Mammary epithelial cell (primary cell): ENCODE measurements at regions of chr11 and their contacts with region 1.

Region 1: GRCh38 chr11:70202898-70203748 is at the start of gene FADD:
- DNase-seq: peak; percentile 93
- H3K4me3 ChIP-seq: peak within 1 kb of the TSS; percentile 90 to 93 (median 91)
- H3K27ac ChIP-seq: peak within 1 kb of the TSS; percentile 91
- H3K4me1 ChIP-seq: peaks cover 22% of the 10 kb centered on the region
- H3K27me3 ChIP-seq: no peaks in the 10 kb centered on the region
- CTCF ChIP-seq: no peak
- total RNA-seq, gene FADD: 31.8 to 45.0 TPM

Region 2: DNA sequence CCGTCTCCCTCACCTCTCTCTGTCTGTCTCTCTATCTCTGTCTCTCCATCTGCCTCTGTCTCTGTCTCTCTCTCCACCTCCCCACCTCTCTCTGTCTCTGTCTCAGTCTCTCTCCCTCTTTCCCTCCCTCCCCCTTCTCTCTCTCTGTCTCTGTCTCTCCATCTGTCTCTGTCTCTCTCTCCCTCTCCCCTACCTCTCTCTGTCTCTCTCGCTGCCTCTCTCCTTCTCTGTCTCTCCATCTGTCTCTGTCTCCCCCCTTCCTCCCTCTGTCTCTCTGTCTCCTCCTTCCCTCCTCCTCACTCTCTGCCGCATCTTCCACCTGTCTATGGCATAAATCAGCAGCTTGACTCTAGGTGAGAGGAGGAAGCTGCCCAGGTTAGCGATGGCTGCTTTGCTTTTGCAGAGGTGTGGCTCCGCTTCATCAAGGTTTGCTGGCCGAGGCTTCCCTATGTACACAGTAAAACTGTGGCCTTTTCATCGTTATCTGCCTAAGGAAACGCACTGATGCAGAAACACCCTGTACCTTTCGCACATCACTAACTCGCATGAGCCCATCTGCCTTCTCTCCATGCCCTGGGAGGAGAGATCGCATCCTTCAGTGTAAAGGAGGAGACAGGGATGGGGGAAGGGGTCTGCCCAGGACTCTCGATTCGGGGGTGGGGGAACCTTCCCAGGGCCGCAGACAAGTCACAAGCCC is 80.5 kb before region 1 on chr11:
- CTCF ChIA-PET with region 1: no interaction called
- dilution Hi-C with region 1: no loop called
- in situ Hi-C with region 1: no loop called
- intact Hi-C with region 1: no loop called
- DNase-seq: no peak
- H3K4me3 ChIP-seq: no peak overlapping the region
- H3K27ac ChIP-seq: no peak overlapping the region
- H3K4me1 ChIP-seq: peaks cover 45% of the 10 kb centered on the region
- H3K27me3 ChIP-seq: no peaks in the 10 kb centered on the region
- CTCF ChIP-seq: no peak

Region 3: GRCh38 chr11:70153133-70153727 is 49.9 kb before region 1 on chr11:
- CTCF ChIA-PET with region 1: no interaction called
- dilution Hi-C with region 1: no loop called
- in situ Hi-C with region 1: no loop called
- intact Hi-C with region 1: no loop called
- DNase-seq: peak; percentile 84
- H3K4me3 ChIP-seq: no peak overlapping the region
- H3K27ac ChIP-seq: no peak overlapping the region
- H3K4me1 ChIP-seq: peaks cover 40% of the 10 kb centered on the region
- H3K27me3 ChIP-seq: no peaks in the 10 kb centered on the region
- CTCF ChIP-seq: no peak

Region 4: DNA sequence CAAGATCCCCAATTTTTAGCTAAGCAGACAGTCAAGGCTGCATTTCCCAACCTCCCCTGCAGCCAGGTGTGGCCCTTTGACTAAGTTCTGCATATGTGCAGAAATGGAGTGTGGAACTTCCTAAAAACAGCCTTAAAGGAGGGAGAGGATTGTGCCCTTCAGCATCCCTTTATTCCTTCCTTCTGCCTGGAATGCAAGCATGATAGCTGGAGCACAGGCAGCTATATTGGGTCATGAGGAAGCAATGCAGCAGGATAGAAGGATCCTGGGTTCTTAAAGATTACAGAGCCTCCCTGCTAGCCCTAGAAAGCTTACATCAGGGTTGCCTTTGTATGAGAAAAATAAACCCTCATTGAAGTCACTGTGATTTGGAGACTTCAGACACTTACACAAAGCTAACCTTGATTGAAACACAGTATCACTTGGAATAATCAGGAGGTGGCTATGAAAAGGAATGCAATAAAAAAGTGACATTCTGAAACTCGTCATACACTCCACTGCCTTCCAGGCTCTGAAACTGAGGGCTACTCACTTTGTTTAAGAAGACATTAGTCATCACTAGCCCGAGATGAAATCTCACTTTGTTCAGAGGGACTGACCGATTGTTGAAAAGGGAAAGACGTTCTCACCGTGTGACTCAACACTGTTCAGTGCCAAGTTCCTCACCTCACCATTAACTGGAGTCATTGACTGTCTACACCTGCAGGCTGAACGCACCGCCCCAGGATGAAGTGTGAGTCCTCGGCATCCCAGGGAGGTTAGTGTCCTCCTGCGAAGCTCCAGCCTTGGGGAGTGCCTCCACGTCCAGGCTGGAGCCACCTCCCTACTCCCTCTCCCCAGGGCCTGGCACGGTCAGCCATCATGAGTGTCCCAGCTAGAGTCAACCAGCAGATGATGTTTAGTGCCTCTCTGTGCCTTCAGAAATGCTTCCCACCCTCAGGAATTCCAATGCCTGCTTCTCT is 30.2 kb after region 1 on chr11:
- CTCF ChIA-PET with region 1: no interaction called
- dilution Hi-C with region 1: no loop called
- in situ Hi-C with region 1: no loop called
- intact Hi-C with region 1: loop called (anchors 1 kb)
- DNase-seq: peak; percentile 100
- H3K4me3 ChIP-seq: no peak overlapping the region
- H3K27ac ChIP-seq: peak overlapping the region; percentile 77
- H3K4me1 ChIP-seq: peaks cover 13% of the 10 kb centered on the region
- H3K27me3 ChIP-seq: peaks cover 5% of the 10 kb centered on the region
- CTCF ChIP-seq: no peak

Region 5: GRCh38 chr11:70247464-70248255 is 44.5 kb after region 1 on chr11:
- CTCF ChIA-PET with region 1: no interaction called
- dilution Hi-C with region 1: no loop called
- in situ Hi-C with region 1: no loop called
- intact Hi-C with region 1: no loop called
- DNase-seq: no peak
- H3K4me3 ChIP-seq: no peak overlapping the region
- H3K27ac ChIP-seq: no peak overlapping the region
- H3K4me1 ChIP-seq: peaks cover 27% of the 10 kb centered on the region
- H3K27me3 ChIP-seq: no peaks in the 10 kb centered on the region
- CTCF ChIP-seq: no peak

Region 6: DNA sequence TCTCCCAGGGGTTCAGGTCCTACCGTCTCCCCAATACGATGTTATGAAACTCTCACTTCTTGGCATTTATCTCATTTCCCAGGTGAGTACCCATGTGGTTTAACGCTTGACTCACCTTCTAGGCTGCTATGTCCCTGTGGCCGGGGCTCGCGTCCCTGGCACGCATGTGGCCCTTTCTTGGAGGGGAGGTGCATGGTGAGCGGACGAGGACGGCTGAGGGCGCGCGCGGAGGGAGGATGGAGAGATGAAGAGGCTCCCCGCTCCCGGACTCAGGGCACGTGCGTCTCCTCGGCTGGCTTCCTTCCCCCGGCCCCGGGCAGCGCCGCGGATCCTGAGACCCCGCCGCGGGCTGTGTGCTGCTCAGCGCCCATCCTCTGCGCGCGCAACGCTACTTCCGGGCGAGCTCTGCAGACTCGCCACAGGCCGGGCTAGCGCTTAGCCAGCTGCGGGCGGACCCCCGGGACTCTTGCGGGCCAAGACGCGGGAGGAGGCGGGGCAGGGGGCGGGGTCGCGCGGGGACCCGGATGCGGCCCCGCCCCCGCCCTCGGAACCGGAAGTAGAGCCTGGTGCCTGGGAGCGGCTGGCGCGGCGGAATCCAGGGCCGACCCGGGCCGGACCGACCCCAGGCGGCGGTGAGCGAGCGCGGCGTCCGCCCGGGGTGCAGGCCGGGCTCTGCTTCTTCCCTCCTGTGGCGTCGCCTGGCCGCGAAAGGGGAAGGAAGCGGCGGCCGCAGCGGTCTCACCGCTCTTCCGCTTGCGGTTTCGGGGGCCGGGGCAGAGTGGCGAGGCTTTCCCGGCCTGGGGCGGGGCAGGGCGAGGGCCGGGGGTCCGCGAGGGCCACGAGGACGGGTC is 195.1 kb after region 1 on chr11 and contains the start of gene CTTN:
- CTCF ChIA-PET with region 1: no interaction called
- dilution Hi-C with region 1: no loop called
- in situ Hi-C with region 1: no loop called
- intact Hi-C with region 1: loop called (anchors 10 kb)
- DNase-seq: peak; percentile 86
- H3K4me3 ChIP-seq: peak within 1 kb of the TSS; percentile 71 to 94 (median 93)
- H3K27ac ChIP-seq: peak within 1 kb of the TSS; percentile 88
- H3K4me1 ChIP-seq: peaks cover 25% of the 10 kb centered on the region
- H3K27me3 ChIP-seq: no peaks in the 10 kb centered on the region
- CTCF ChIP-seq: no peak
- total RNA-seq, gene CTTN: 312 to 394 TPM